H1 (cell line): ENCODE measurements at regions of chr2 and their contacts with region 1.

Region 1: GRCh38 chr2:219177552-219178376 is at the start of gene RETREG2:
- DNase-seq: peak; percentile 61 to 88
- H3K4me3 ChIP-seq: peak within 1 kb of the TSS; percentile 78 to 96 (median 92)
- H3K27ac ChIP-seq: peak within 1 kb of the TSS; percentile 78
- H3K4me1 ChIP-seq: peaks cover 0 to 13% (median 6%) of the 10 kb centered on the region in 4 experiments; a peak in 6 of 7 replicates
- H3K27me3 ChIP-seq: no peaks in the 10 kb centered on the region
- CTCF ChIP-seq: peak; percentile 44 to 61 (median 53)
- EP300 ChIP-seq: peak in 1 of 2 experiments; percentile 81; a peak in 1 of 3 replicates
- POLR2A ChIP-seq: peak in 1 of 2 experiments; percentile 31; a peak in 1 of 3 replicates
- RAD21 ChIP-seq: peak in 1 of 2 experiments; percentile 36; a peak in 1 of 4 replicates
- total RNA-seq, gene RETREG2: 50.2 and 51.3 TPM in 2 replicates

Region 2: GRCh38 chr2:219010162-219010756 is 167.5 kb before region 1 on chr2:
- CTCF ChIA-PET with region 1: no interaction called
- POLR2A ChIA-PET with region 1: no interaction called
- DNase-seq: no peak
- H3K4me3 ChIP-seq: no peak overlapping the region
- H3K27ac ChIP-seq: no peak overlapping the region
- H3K4me1 ChIP-seq: no peaks in the 10 kb centered on the region
- H3K27me3 ChIP-seq: peaks cover 1 to 21% (median 10%) of the 10 kb centered on the region in 4 experiments
- CTCF ChIP-seq: peak; percentile 67 to 85 (median 81)
- EP300 ChIP-seq: no peak
- POLR2A ChIP-seq: no peak
- RAD21 ChIP-seq: peak; percentile 69 to 75

Region 3: GRCh38 chr2:219095406-219095935 is 82.3 kb before region 1 on chr2:
- CTCF ChIA-PET with region 1: no interaction called
- POLR2A ChIA-PET with region 1: no interaction called
- DNase-seq: no peak
- H3K4me3 ChIP-seq: no peak overlapping the region
- H3K27ac ChIP-seq: no peak overlapping the region
- H3K4me1 ChIP-seq: peaks cover 0 to 3% (median 0%) of the 10 kb centered on the region in 4 experiments; a peak in 1 of 7 replicates
- H3K27me3 ChIP-seq: peaks cover 0 to 1% (median 0%) of the 10 kb centered on the region in 4 experiments; a peak in 1 of 7 replicates
- CTCF ChIP-seq: no peak
- EP300 ChIP-seq: no peak
- POLR2A ChIP-seq: no peak
- RAD21 ChIP-seq: no peak

Region 4: DNA sequence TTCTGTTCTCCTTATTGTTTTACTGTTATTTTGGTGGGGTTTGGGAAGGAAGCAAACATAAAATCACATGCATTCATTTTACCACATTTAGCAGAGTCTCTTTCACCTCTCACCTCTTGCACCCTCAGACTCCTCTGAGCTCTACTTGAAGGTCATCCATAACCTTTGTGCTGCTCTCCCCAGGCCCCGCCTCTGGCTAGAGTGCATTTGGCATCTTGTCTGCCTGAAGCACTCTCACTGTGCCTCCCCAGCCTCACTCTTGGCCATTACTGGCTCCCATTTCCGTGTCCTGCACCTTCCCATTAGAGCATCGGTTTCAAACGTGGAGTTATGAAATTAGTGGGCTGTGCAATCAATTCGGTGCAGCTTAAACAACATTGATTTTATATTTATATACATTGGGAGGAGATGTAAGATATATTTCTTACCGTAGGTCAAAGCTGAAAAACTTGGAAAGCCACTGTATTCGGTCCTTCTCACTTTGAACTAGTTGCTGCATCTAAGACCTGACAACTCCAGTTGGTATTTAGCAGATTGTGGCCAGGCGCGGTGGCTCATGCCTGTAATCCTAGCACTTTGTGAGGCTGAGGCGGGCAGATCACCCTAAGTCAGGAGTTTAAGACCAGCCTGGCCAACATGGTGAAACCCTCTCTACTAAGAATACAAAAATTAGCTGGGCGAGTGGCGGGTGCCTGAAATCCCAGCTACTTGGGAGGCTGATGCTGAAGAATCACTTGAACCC is 21.9 kb after region 1 on chr2:
- CTCF ChIA-PET with region 1: interaction called, 9 read pairs
- POLR2A ChIA-PET with region 1: interaction called, 14 read pairs
- DNase-seq: no peak
- H3K4me3 ChIP-seq: no peak overlapping the region; a peak in 1 of 8 replicates
- H3K27ac ChIP-seq: no peak overlapping the region
- H3K4me1 ChIP-seq: no peaks in the 10 kb centered on the region
- H3K27me3 ChIP-seq: no peaks in the 10 kb centered on the region
- CTCF ChIP-seq: no peak
- EP300 ChIP-seq: no peak
- POLR2A ChIP-seq: no peak
- RAD21 ChIP-seq: no peak

Region 5: DNA sequence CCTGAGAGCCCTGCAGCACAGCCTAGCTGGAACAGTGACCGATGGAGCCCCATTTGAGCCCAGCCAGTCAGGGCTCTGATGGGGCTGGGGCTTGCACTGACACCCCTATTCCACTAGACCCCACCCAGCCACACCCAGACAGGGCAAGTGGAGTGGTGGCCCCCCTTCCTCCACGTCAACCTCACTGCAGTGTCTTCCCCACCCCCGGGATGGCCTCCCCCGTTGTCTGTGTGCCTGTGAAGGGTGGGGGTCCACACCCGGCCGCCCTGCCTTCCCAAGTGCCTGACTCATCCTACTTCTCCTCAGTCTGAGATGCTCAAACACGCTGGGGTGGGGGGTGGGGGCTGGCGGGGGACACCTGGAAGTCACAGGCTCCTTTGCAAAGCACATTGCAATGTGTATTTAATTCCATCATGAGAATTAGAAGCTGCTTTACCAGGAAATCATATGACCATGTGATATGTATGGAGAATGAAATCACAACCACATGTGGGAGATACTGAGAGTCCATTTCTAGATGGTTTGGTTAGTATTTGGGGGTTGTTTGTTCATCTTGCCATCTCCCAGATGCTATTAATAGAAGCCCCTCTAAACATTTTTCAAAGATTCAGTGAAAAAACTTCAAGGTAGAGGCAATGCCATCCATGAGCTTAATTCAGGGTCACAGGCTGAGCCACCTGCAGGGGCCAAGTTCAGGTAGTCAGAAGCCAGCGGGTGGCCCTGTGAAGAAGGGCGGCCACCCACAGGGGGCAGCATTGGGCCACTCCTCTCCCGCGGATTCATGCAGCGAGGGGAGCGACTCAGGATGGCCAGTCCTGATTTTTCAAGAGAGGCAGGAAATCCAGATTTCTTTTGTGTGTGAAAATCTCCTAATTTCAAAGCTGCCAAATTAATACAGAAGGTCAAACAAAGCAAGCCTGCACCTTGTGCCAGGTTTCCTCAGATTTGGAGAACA is 298.2 kb after region 1 on chr2:
- CTCF ChIA-PET with region 1: no interaction called
- POLR2A ChIA-PET with region 1: no interaction called
- DNase-seq: peak in 1 of 2 experiments; percentile 95
- H3K4me3 ChIP-seq: peak overlapping the region; percentile 29 to 57 (median 36); a peak in 7 of 8 replicates
- H3K27ac ChIP-seq: no peak overlapping the region
- H3K4me1 ChIP-seq: peaks cover 0 to 13% (median 6%) of the 10 kb centered on the region in 4 experiments; a peak in 5 of 7 replicates
- H3K27me3 ChIP-seq: 0 out of 7 replicates have a peak, but pooled peaks cover 0 to 2% (median 0%) of the 10 kb centered on the region in 4 experiments
- CTCF ChIP-seq: peak in 2 of 3 experiments; percentile 87 to 93; a peak in 3 of 4 replicates
- EP300 ChIP-seq: no peak
- POLR2A ChIP-seq: no peak; a peak in 1 of 3 replicates
- RAD21 ChIP-seq: peak; percentile 75 to 82